Activated B cell treated with CpG ODN at 0.5 μM for 24 hours (primary cell): ENCODE measurements at regions of chr12 and their contacts with region 1.

Region 1: DNA sequence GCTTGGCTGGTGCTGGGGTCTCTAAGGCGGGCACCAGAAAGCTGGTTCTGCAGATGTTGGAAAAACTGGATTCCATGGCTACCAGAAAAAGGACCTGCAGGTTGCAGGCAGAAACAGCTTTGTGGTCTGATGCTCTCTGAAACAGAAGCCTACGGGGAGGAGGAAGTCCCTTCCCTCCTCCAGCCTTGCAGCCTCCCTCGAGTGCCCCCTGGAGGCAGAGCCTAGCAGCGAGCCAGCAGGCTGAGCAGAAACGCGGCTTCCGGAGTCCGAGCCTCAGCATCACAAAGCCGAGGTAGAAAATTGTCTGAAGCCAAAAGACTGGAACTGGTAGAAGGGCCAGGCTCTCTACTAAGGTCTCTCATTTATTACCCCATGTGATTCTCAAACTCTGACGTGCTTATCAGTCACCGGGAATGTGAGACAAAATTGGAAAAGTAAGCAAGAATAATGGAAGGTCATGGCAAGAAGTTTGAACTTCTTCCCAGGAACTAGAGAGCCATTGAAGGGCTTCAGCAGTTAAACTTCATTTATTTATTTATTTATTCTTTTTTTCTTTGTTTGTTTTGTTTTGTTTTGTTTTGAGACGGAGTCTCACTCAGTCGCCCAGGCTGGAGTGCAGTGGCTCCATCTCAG is 82.2 kb upstream of the CPSF6 start:
- DNase-seq: peak; percentile 83
- ATAC-seq: peak; percentile 97
- H3K4me3 Mint-ChIP-seq: peak overlapping the region; percentile 17
- H3K27ac Mint-ChIP-seq: peak overlapping the region; percentile 24
- H3K4me1 Mint-ChIP-seq: peaks cover 14% of the 10 kb centered on the region
- H3K27me3 Mint-ChIP-seq: no peaks in the 10 kb centered on the region
- CTCF ChIP-seq: peak; percentile 85

Region 2: GRCh38 chr12:68865399-68866164 is 291.6 kb before region 1 on chr12:
- CTCF ChIA-PET with region 1: interaction called, 5 read pairs
- POLR2A ChIA-PET with region 1: no interaction called
- intact Hi-C with region 1: loop called (anchors 1 kb)
- DNase-seq: no peak
- ATAC-seq: no peak
- H3K4me3 Mint-ChIP-seq: no peak overlapping the region
- H3K27ac Mint-ChIP-seq: no peak overlapping the region
- H3K4me1 Mint-ChIP-seq: peaks cover 18% of the 10 kb centered on the region
- H3K27me3 Mint-ChIP-seq: no peaks in the 10 kb centered on the region
- CTCF ChIP-seq: no peak

Region 3: GRCh38 chr12:69254046-69254445 is 96.9 kb after region 1 on chr12:
- CTCF ChIA-PET with region 1: interaction called, 56 read pairs
- POLR2A ChIA-PET with region 1: interaction called, 3 read pairs
- intact Hi-C with region 1: loop called (anchors 1 kb)
- DNase-seq: no peak
- ATAC-seq: peak; percentile 50
- H3K4me3 Mint-ChIP-seq: no peak overlapping the region
- H3K27ac Mint-ChIP-seq: no peak overlapping the region
- H3K4me1 Mint-ChIP-seq: peaks cover 42% of the 10 kb centered on the region
- H3K27me3 Mint-ChIP-seq: no peaks in the 10 kb centered on the region
- CTCF ChIP-seq: no peak

Region 4: DNA sequence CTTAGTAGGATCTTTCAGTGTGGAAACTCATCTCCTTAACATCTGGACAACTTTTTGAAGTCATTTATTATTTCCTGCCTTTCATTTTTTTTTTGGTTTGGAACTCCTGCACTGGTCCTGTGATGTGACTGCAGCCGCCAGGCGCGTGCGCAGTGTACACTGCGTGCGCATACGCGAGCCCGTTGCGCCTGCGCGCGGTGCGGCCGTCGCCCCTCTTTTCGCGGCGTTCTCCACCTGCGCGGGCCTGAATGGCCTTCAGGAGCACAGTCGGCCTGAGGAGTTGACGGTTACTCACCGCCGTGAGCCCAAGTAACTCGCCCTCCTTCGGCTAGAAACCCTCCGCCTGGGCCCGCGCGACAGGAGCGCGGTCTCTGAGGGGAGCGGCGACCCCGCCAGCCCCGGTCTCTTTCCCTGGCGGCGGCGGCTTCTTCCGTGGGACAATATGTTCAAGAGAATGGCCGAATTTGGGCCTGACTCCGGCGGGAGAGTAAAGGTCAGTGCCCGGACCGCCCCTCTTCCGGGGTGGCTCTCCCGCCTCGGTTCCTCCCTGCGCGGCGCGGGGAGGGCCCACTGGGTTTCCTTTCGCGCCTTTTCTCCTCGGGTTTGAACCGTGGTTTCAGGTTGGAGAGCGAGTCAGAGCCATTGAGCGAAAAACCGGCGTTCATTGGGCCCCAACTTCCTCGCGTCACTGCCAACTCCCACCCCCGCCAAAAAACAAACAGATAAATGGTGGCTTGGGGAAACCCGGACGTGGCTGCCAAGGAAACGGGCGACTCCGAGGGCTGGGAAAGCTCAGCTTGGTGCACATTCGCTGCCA is 202.6 kb after region 1 on chr12 and contains the start of gene YEATS4:
- CTCF ChIA-PET with region 1: interaction called, 4 read pairs
- POLR2A ChIA-PET with region 1: no interaction called
- intact Hi-C with region 1: loop called (anchors 1 kb)
- DNase-seq: peak; percentile 82
- ATAC-seq: peak; percentile 81
- H3K4me3 Mint-ChIP-seq: peak within 1 kb of the TSS; percentile 88
- H3K27ac Mint-ChIP-seq: peak within 1 kb of the TSS; percentile 81
- H3K4me1 Mint-ChIP-seq: peaks cover 20% of the 10 kb centered on the region
- H3K27me3 Mint-ChIP-seq: no peaks in the 10 kb centered on the region
- CTCF ChIP-seq: no peak
- total RNA-seq, gene YEATS4: 14.9 and 19.3 TPM in 2 replicates

Region 5: GRCh38 chr12:69570545-69571399 is 413.6 kb after region 1 on chr12:
- CTCF ChIA-PET with region 1: interaction called, 15 read pairs
- POLR2A ChIA-PET with region 1: no interaction called
- intact Hi-C with region 1: loop called (anchors 1 kb)
- DNase-seq: no peak
- ATAC-seq: peak; percentile 82
- H3K4me3 Mint-ChIP-seq: no peak overlapping the region
- H3K27ac Mint-ChIP-seq: no peak overlapping the region
- H3K4me1 Mint-ChIP-seq: no peaks in the 10 kb centered on the region
- H3K27me3 Mint-ChIP-seq: no peaks in the 10 kb centered on the region
- CTCF ChIP-seq: peak; percentile 88

Region 6: DNA sequence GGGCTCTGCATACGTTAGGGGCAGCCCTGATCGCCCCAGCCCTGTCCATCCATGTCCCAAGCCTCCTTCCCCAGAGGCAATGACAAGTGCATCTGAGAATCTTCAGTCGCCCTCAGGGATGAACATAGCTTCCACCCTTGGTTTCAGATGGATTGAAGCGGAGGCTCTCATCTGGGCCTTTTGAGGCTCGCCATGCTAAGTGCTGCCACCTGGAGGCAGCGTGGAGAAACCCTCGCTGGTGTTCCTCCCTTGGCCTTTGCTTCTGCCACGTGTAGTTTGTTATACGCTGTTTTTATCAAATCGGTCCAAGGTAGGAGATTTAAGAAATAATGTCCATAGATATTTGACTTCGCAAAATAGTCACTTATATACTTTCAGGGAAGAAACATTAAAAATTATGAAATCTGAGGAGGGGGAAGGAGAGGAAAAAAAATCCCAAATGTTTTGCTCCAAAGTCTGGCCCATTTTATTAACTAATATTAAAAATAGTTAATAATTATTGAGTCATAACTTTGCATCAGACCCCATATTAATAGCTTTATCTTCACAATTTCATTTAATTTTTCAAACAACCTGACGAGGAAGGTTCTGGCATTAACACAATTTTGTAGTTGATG is 482.4 kb after region 1 on chr12:
- CTCF ChIA-PET with region 1: interaction called, 3 read pairs
- POLR2A ChIA-PET with region 1: no interaction called
- intact Hi-C with region 1: loop called (anchors 1 kb)
- DNase-seq: peak; percentile 37
- ATAC-seq: peak; percentile 77
- H3K4me3 Mint-ChIP-seq: no peak overlapping the region
- H3K27ac Mint-ChIP-seq: no peak overlapping the region
- H3K4me1 Mint-ChIP-seq: no peaks in the 10 kb centered on the region
- H3K27me3 Mint-ChIP-seq: no peaks in the 10 kb centered on the region
- CTCF ChIP-seq: peak; percentile 77